ENCODE measurements at regions of chr17 and their contacts with region 1.

Region 1: GRCh38 chr17:48908047-48908843 is at the start of gene UBE2Z:
- DNase-seq: peak; percentile 87 to 93 (median 88)
- H3K4me3 ChIP-seq: peak within 1 kb of the TSS; percentile 37 to 82 (median 68)
- H3K4me3 Mint-ChIP-seq: peak within 1 kb of the TSS; percentile 93 to 98
- H3K27ac ChIP-seq: peak within 1 kb of the TSS; percentile 93 to 98
- H3K27ac Mint-ChIP-seq: peak within 1 kb of the TSS; percentile 96 to 100 (median 98)
- H3K4me1 ChIP-seq: peaks cover 25 to 37% of the 10 kb centered on the region in 2 donors
- H3K4me1 Mint-ChIP-seq: peaks cover 35% of the 10 kb centered on the region
- H3K27me3 ChIP-seq: no peaks in the 10 kb centered on the region
- H3K27me3 Mint-ChIP-seq: peaks cover 0 to 3% (median 0%) of the 10 kb centered on the region in 3 donors
- CTCF ChIP-seq: no peak
- polyA plus RNA-seq, gene UBE2Z: 35.8 to 44.7 (median 40.0) TPM

Region 2: DNA sequence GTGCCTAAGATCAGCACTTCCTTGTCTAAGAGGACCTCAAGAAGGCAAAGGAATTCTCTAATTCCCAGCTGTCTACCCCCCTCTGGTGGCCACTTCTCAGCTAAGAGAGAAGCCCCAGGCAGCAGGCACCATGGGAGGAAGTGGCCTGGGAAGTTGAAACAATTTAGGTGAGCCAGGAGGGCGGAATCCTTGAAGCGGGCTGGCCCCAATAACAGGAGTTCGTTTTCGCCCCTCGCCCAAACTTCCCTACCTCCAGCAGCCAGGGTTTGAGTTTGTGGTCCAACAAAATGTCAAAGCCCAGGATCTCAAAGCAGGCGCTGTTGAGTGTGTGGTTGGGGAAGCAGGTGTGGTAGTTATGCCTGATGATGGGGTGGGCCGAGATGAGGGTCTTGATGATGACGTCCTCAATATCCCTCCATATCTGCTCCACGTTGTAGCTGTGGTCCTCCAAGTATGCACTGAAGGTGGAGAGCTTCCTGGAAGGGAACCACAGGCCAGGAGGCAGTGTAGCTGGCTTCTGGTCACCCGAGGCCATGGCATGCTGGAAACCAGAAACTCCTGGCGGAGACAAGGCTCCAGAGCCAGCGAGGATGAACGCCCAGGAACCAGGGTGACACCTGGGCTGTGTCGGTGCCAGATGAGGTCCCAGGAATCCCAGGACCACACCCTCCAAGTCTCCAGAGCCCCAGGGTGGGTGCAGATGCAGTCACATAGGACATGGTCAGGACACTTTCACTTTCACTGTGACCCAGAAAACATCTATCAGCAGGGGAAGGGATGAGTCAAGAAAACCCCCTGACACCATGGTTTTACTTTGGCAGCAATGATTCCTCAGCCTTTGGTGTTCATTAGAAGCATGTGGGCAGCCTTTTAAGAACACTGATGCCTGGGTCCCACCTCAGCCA is 116.9 kb before region 1 on chr17:
- intact Hi-C with region 1: no loop called
- DNase-seq: peak; percentile 19 to 61 (median 40)
- H3K4me3 ChIP-seq: no peak overlapping the region
- H3K4me3 Mint-ChIP-seq: no peak overlapping the region
- H3K27ac ChIP-seq: no peak overlapping the region
- H3K27ac Mint-ChIP-seq: no peak overlapping the region
- H3K4me1 ChIP-seq: peaks cover under 1 to 3% of the 10 kb centered on the region in 2 donors
- H3K4me1 Mint-ChIP-seq: peaks cover 10% of the 10 kb centered on the region
- H3K27me3 ChIP-seq: peaks cover 5 to 22% of the 10 kb centered on the region in 2 donors
- H3K27me3 Mint-ChIP-seq: peaks cover 27 to 64% (median 43%) of the 10 kb centered on the region in 3 donors
- CTCF ChIP-seq: peak; percentile 72

Region 3: GRCh38 chr17:48816774-48817590 is 91.3 kb before region 1 on chr17 and contains the start of gene TTLL6:
- intact Hi-C with region 1: no loop called
- DNase-seq: peak; percentile 29 to 57 (median 34)
- H3K4me3 ChIP-seq: peak within 1 kb of the TSS in 1 of 3 experiments; percentile 51
- H3K4me3 Mint-ChIP-seq: peak within 1 kb of the TSS; percentile 25 to 89
- H3K27ac ChIP-seq: no peak within 1 kb of the TSS
- H3K27ac Mint-ChIP-seq: peak within 1 kb of the TSS in 1 of 7 donors; percentile 72
- H3K4me1 ChIP-seq: peaks cover 10 to 12% of the 10 kb centered on the region in 2 donors
- H3K4me1 Mint-ChIP-seq: peaks cover 11% of the 10 kb centered on the region
- H3K27me3 ChIP-seq: peaks cover 49 to 50% of the 10 kb centered on the region in 2 donors
- H3K27me3 Mint-ChIP-seq: peaks cover 61 to 87% (median 65%) of the 10 kb centered on the region in 3 donors
- CTCF ChIP-seq: no peak
- polyA plus RNA-seq, gene TTLL6: not detected

Region 4: GRCh38 chr17:48830840-48831548 is 77.3 kb before region 1 on chr17 and contains the start of gene CALCOCO2:
- intact Hi-C with region 1: loop called in 1 of 2 experiments (anchors 5 kb)
- DNase-seq: peak; percentile 94 to 95 (median 95)
- H3K4me3 ChIP-seq: peak within 1 kb of the TSS; percentile 72 to 92 (median 92)
- H3K4me3 Mint-ChIP-seq: peak within 1 kb of the TSS; percentile 94 to 98
- H3K27ac ChIP-seq: peak within 1 kb of the TSS; percentile 96 to 98
- H3K27ac Mint-ChIP-seq: peak within 1 kb of the TSS; percentile 99 to 100 (median 100)
- H3K4me1 ChIP-seq: peaks cover 15 to 18% of the 10 kb centered on the region in 2 donors
- H3K4me1 Mint-ChIP-seq: peaks cover 28% of the 10 kb centered on the region
- H3K27me3 ChIP-seq: peaks cover 3 to 4% of the 10 kb centered on the region in 2 donors
- H3K27me3 Mint-ChIP-seq: peaks cover 8 to 33% (median 18%) of the 10 kb centered on the region in 3 donors
- CTCF ChIP-seq: no peak
- polyA plus RNA-seq, gene CALCOCO2: 87.5 to 280 (median 214) TPM

Region 5: GRCh38 chr17:48961516-48962233 is 53.4 kb after region 1 on chr17:
- intact Hi-C with region 1: no loop called
- DNase-seq: no peak
- H3K4me3 ChIP-seq: no peak overlapping the region
- H3K4me3 Mint-ChIP-seq: peak overlapping the region in 1 of 2 donors; percentile 40
- H3K27ac ChIP-seq: no peak overlapping the region
- H3K27ac Mint-ChIP-seq: no peak overlapping the region
- H3K4me1 ChIP-seq: no peaks in the 10 kb centered on the region
- H3K4me1 Mint-ChIP-seq: no peaks in the 10 kb centered on the region
- H3K27me3 ChIP-seq: peaks cover 0 to 23% of the 10 kb centered on the region in 2 donors
- H3K27me3 Mint-ChIP-seq: peaks cover 26 to 58% (median 48%) of the 10 kb centered on the region in 3 donors
- CTCF ChIP-seq: no peak

Region 6: DNA sequence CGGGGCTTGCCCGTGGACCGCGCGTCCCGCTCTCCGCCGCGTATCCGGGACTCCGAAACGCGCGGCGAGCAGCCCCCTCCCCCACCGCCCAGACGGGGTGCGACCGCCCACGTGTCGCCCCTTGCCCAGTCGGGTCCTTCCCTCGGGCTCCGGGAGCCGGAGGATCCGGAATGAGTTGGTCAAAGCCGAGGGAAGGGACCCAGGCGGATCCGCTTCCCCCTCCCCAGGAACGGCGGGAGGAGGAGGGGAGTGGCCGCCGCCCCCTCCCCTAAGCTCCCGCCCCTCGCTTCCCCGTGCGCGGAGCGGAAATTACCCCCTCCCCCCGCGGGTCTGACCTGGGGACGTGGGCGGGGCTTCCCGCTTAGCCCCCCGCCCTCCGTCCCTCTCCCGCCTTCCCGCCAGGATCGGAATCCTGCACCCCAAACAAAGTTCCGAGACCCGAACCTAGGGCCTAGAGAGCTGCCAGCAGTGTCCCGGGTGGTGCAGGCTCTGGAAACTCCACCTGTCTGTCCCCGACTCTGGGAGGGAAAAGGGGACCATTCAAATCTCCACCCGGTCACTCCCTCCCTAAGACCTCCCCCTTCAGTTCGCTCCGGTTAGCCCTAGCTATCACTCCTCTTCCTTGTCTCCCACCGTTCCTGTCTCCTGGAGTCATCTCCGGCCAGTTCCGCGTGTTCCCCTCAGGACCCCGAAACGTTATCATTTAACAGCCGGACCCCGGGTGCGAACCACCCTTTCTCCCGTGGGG is 87.9 kb after region 1 on chr17:
- intact Hi-C with region 1: no loop called
- DNase-seq: no peak
- H3K4me3 ChIP-seq: no peak overlapping the region
- H3K4me3 Mint-ChIP-seq: peak overlapping the region in 1 of 2 donors; percentile 88
- H3K27ac ChIP-seq: no peak overlapping the region
- H3K27ac Mint-ChIP-seq: no peak overlapping the region
- H3K4me1 ChIP-seq: peaks cover 24 to 30% of the 10 kb centered on the region in 2 donors
- H3K4me1 Mint-ChIP-seq: peaks cover 27% of the 10 kb centered on the region
- H3K27me3 ChIP-seq: peaks cover 87 to 100% of the 10 kb centered on the region in 2 donors
- H3K27me3 Mint-ChIP-seq: peaks cover 83 to 91% (median 90%) of the 10 kb centered on the region in 3 donors
- CTCF ChIP-seq: no peak